Activated CD4-positive, alpha-beta T cell treated with anti-CD3 and anti-CD28 coated beads, Interleukin-2, amount 10 ng/mL, durations not matched to agents 24 days and 14 days (primary cell): ENCODE measurements at regions of chr7 and their contacts with region 1.

Region 1: GRCh38 chr7:35801392-35802101 is 690 bp downstream of the SEPTIN7 start:
- DNase-seq: peak; percentile 92
- H3K4me3 Mint-ChIP-seq: peak overlapping the region; percentile 100
- H3K27ac Mint-ChIP-seq: peak overlapping the region; percentile 98
- H3K4me1 Mint-ChIP-seq: peaks cover 38% of the 10 kb centered on the region
- H3K27me3 Mint-ChIP-seq: no peaks in the 10 kb centered on the region

Region 2: DNA sequence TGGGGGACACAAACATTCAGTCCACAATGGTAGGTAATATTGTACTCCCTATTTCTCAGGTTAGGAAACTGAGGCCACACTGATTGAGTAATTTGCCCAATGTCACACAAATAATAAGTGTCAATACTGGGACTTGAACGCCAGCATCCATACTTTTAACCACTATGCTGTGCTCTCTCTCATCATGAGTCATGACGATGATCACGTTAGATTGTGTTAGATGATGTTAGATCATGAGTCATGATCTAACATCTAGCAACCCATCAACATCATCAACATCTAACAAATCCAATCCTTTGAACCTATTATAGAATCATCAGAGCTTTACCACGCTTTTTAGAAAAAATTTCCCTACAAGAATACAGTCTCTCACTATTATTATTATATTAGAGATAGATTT is 78.5 kb before region 1 on chr7:
- intact Hi-C with region 1: loop called (anchors 1 kb)
- DNase-seq: no peak
- H3K4me3 Mint-ChIP-seq: peak overlapping the region; percentile 40
- H3K27ac Mint-ChIP-seq: peak overlapping the region; percentile 61
- H3K4me1 Mint-ChIP-seq: peaks cover 30% of the 10 kb centered on the region
- H3K27me3 Mint-ChIP-seq: peaks cover 12% of the 10 kb centered on the region

Region 3: DNA sequence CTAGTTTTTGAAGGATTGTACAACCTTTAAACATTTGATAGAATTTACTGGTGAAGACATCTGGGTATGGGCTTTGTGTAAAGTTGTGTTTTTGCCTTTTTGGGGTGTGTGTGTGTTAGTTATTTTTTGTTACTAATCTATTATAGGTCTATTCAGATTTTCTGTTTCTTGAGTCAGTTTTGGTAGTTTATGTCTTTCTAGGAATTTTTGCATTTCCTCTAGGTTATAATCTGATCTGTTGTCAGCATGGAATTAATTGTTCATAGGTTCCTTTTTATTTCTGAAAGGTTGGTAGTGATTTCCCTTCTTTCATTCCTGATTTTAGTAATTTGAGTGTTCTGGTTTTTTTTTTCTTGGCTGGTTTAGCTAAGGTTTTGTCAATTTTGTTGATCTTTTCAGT is 17.0 kb after region 1 on chr7:
- intact Hi-C with region 1: loop called (anchors 1 kb)
- DNase-seq: peak; percentile 2
- H3K4me3 Mint-ChIP-seq: peak overlapping the region; percentile 48
- H3K27ac Mint-ChIP-seq: peak overlapping the region; percentile 88
- H3K4me1 Mint-ChIP-seq: peaks cover 52% of the 10 kb centered on the region
- H3K27me3 Mint-ChIP-seq: no peaks in the 10 kb centered on the region

Region 4: GRCh38 chr7:36084475-36085097 is 283.0 kb after region 1 on chr7:
- intact Hi-C with region 1: no loop called
- DNase-seq: no peak
- H3K4me3 Mint-ChIP-seq: no peak overlapping the region
- H3K27ac Mint-ChIP-seq: no peak overlapping the region
- H3K4me1 Mint-ChIP-seq: no peaks in the 10 kb centered on the region
- H3K27me3 Mint-ChIP-seq: no peaks in the 10 kb centered on the region

Region 5: GRCh38 chr7:36152756-36153570 is 351.4 kb after region 1 on chr7 and contains the start of gene EEPD1:
- intact Hi-C with region 1: loop called (anchors 10 kb)
- DNase-seq: peak; percentile 100
- H3K4me3 Mint-ChIP-seq: peak within 1 kb of the TSS; percentile 82
- H3K27ac Mint-ChIP-seq: peak within 1 kb of the TSS; percentile 46
- H3K4me1 Mint-ChIP-seq: peaks cover 17% of the 10 kb centered on the region
- H3K27me3 Mint-ChIP-seq: peaks cover 10% of the 10 kb centered on the region
- total RNA-seq, gene EEPD1: 0.61 and 0.71 TPM in 2 replicates